Naive thymus-derived CD8-positive, alpha-beta T cell (primary cell): ENCODE measurements at regions of chr6 and their contacts with region 1.

Region 1: DNA sequence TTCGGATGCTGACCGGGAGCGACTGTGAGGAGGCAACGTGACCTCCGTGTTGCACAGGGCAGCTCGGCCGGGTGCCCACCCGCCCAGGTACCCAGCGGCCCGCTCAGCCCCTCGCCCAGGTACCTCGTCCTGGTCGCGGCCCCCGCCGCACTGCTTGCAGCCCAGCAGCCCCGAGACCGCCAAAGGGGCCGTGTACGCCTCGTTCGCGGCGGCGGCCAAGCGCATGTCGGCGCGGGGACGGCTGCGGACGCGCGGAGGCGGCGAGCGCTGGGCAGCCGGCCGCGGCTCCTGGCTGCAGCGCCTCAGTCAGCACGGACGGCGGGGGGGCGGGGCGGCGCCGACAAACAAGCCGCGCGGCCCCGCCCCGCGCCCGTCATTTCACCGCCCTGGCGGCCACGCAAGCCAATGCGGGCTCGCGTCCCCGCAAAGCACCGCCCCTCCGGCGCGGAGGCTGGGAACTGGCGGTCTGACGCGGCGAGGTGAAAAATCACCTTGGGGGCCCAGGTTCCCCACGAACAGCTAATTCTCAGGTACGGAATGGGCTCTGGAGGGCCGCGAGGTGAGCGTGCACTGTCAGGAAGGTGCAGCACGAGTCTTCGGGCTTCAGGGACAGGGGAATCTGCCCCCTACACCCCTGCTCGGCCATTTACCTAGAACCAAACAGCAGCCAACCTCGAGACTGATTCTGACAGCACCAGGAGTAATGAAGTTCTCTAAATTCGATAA is 85.2 kb downstream of the SESN1 start:
- DNase-seq: peak; percentile 84 to 95 (median 92)
- ATAC-seq: peak; percentile 91 to 92
- H3K4me3 Mint-ChIP-seq: peak overlapping the region; percentile 92 to 99 (median 96)
- H3K27ac Mint-ChIP-seq: peak overlapping the region; percentile 92 to 100 (median 100)
- H3K4me1 Mint-ChIP-seq: peaks cover 37 to 81% (median 62%) of the 10 kb centered on the region in 4 donors
- H3K27me3 Mint-ChIP-seq: no peaks in the 10 kb centered on the region

Region 2: GRCh38 chr6:108558372-108559096 is 450.9 kb before region 1 on chr6:
- POLR2A ChIA-PET with region 1: interaction called, 11 read pairs
- DNase-seq: peak; percentile 94 to 99 (median 96)
- ATAC-seq: peak; percentile 67 to 74
- H3K4me3 Mint-ChIP-seq: peak overlapping the region; percentile 90 to 98 (median 96)
- H3K27ac Mint-ChIP-seq: peak overlapping the region; percentile 93 to 100 (median 98)
- H3K4me1 Mint-ChIP-seq: peaks cover 13 to 33% (median 22%) of the 10 kb centered on the region in 4 donors
- H3K27me3 Mint-ChIP-seq: peaks cover 0 to 6% (median 0%) of the 10 kb centered on the region in 5 donors

Region 3: DNA sequence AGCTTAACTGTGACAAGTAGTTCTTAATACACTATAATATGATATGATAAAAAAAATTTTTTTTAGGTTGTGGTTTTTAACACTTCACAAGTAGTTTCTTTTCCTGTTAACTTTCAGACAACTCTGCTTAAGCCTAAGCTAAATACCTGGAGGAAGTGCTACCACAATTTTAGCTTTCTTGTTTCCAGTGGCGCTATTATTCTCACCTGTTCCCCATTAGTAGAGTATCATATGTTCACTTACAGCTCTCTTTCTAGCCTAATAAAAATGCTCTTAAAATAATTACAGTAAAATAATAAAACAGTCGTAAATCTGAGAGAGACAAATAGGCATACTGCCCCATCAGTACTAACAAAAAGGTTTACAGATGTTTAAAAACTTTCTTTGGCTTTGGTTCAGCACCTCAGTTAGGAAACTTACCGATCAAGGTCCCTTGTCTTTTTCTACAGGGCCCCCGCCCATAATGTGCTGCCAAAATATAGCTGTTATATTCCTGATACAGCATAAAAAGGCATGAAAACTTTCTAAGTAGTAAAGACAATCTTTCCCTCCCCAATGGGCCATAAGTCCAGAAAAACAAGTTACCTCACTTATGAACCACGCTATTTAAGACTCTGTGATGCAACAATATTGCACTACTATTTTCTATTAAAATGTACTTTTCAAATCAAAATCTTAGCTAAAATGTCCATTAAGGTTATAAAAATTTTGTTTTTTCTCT is 27.3 kb after region 1 on chr6:
- POLR2A ChIA-PET with region 1: interaction called, 19 read pairs
- DNase-seq: peak in 3 of 10 donors; percentile 28 to 32 (median 32)
- ATAC-seq: peak; percentile 81 to 85
- H3K4me3 Mint-ChIP-seq: peak overlapping the region in 9 of 10 donors; percentile 11 to 70 (median 45)
- H3K27ac Mint-ChIP-seq: peak overlapping the region; percentile 35 to 84 (median 58)
- H3K4me1 Mint-ChIP-seq: peaks cover 4 to 51% (median 39%) of the 10 kb centered on the region in 4 donors
- H3K27me3 Mint-ChIP-seq: no peaks in the 10 kb centered on the region

Region 4: GRCh38 chr6:109059571-109060021 is 50.2 kb after region 1 on chr6:
- POLR2A ChIA-PET with region 1: interaction called, 17 read pairs
- DNase-seq: peak in 5 of 10 donors; percentile 6 to 53 (median 48)
- ATAC-seq: peak; percentile 99 to 100
- H3K4me3 Mint-ChIP-seq: peak overlapping the region; percentile 7 to 68 (median 57)
- H3K27ac Mint-ChIP-seq: peak overlapping the region; percentile 49 to 92 (median 86)
- H3K4me1 Mint-ChIP-seq: peaks cover 18 to 46% (median 41%) of the 10 kb centered on the region in 4 donors
- H3K27me3 Mint-ChIP-seq: no peaks in the 10 kb centered on the region

Region 5: DNA sequence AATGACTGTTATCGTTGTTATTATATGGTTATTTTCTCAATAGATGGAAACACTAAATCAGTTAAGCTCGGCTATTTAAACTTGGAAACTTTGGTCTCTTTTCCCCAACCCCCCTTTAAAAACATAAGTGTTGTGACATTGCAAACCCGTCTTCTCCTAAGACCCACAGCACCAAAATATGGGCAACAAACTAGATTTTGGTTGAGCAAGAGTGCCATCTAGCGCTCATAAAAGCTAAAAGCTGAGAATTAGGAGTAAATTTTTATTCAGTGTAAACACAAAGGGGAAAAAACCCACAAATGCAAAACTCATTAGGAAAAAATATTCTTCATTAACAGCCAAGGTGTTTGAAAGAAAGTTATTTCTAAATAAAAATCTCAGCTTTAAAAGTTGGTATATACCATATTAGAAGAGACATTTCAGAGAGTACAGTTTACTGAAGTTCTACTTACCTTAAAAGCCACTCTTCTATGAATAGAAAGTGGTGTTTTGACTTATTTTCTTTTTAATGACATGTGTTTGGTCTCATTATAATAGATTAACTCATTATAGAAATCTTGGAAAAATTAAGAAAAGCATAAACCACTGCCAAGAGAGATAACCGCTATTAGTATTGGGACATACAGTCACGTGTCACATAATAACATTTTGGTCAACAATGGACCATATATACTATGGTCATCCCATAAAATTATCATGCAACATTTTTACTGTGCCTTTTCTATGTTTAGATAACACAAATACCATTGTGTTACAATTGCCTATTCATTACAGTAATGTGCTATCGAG is 64.1 kb after region 1 on chr6:
- POLR2A ChIA-PET with region 1: interaction called, 54 read pairs
- DNase-seq: peak in 9 of 10 donors; percentile 27 to 77 (median 65)
- ATAC-seq: peak; percentile 63 to 73
- H3K4me3 Mint-ChIP-seq: peak overlapping the region in 6 of 10 donors; percentile 1 to 28 (median 2)
- H3K27ac Mint-ChIP-seq: peak overlapping the region in 3 of 10 donors; percentile 7 to 53 (median 9)
- H3K4me1 Mint-ChIP-seq: peaks cover 10 to 41% (median 25%) of the 10 kb centered on the region in 4 donors
- H3K27me3 Mint-ChIP-seq: no peaks in the 10 kb centered on the region

Region 6: GRCh38 chr6:109095027-109095834 is 85.8 kb after region 1 on chr6 and contains the start of gene CEP57L1:
- POLR2A ChIA-PET with region 1: interaction called, 18 read pairs
- DNase-seq: peak; percentile 88 to 97 (median 94)
- ATAC-seq: peak; percentile 75 to 76
- H3K4me3 Mint-ChIP-seq: peak within 1 kb of the TSS; percentile 88 to 98 (median 94)
- H3K27ac Mint-ChIP-seq: peak within 1 kb of the TSS; percentile 97 to 100 (median 99)
- H3K4me1 Mint-ChIP-seq: peaks cover 24 to 56% (median 51%) of the 10 kb centered on the region in 4 donors
- H3K27me3 Mint-ChIP-seq: no peaks in the 10 kb centered on the region
- polyA plus RNA-seq, gene CEP57L1: 5.4 to 9.5 (median 6.2) TPM

Region 7: DNA sequence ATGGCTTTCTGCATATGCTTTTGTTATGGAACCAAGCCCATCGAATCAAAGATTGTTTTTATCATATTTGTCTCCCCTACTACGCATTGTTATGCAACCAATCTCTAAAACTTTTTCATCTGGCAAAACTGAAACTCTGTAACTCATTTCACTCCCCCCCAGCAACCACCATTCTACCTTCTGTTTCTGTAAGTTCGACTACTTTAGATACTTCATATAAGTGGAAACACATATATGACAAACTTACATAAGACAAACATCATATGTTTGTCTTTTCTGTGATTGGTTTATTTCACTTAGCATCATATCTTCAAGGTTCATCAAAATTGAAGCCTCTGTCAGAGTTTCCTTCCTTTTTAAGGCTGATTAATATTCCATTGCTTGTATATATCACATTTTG is 120.7 kb after region 1 on chr6:
- POLR2A ChIA-PET with region 1: no interaction called
- DNase-seq: no peak
- ATAC-seq: no peak
- H3K4me3 Mint-ChIP-seq: no peak overlapping the region
- H3K27ac Mint-ChIP-seq: no peak overlapping the region
- H3K4me1 Mint-ChIP-seq: no peaks in the 10 kb centered on the region
- H3K27me3 Mint-ChIP-seq: no peaks in the 10 kb centered on the region